CD4-positive, alpha-beta T cell (primary cell): ENCODE measurements at regions of chr3 and their contacts with region 1.

Region 1: GRCh38 chr3:197577366-197578074 is 21.8 kb upstream of the BDH1 start:
- DNase-seq: no peak
- ATAC-seq: no peak
- H3K4me3 ChIP-seq: no peak overlapping the region
- H3K4me3 Mint-ChIP-seq: no peak overlapping the region
- H3K27ac ChIP-seq: no peak overlapping the region
- H3K27ac Mint-ChIP-seq: no peak overlapping the region
- H3K4me1 ChIP-seq: no peaks in the 10 kb centered on the region
- H3K4me1 Mint-ChIP-seq: no peaks in the 10 kb centered on the region
- H3K27me3 ChIP-seq: no peaks in the 10 kb centered on the region
- H3K27me3 Mint-ChIP-seq: no peaks in the 10 kb centered on the region
- CTCF ChIP-seq: no peak

Region 2: DNA sequence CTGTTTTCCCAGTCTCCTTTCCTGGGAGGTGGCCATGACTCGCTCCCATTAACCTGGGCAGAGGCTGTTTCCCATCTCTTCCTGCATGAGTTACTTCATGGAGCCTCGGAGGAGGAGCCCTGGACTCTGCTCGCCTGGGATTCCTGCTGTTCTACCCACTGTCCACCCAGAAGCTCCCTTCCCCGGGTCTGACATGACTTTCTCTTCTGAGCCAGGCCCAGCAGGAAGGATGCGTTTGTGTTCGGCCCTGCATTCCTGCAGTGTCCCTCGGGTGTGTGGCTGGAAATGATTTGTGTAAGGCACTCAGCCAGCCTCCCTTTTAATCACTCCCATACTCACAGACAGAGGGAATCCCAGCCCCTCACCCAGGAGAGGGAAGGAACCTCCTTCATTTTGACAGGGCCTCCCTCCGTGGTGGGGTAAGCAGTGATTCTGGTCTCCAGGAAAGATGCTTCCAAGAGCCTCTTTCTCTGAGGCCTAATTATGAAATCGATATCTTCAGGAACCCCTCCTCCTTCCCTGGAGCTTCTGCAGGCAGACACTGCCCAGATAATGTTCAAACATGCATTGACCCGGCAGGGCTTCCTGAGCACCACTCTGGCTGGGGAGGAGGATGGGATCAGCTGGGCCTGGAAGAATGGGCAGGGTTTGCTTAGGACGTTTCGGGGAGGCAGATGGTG is 237.5 kb before region 1 on chr3:
- CTCF ChIA-PET with region 1: no interaction called
- POLR2A ChIA-PET with region 1: no interaction called
- intact Hi-C with region 1: no loop called
- DNase-seq: no peak
- ATAC-seq: no peak
- H3K4me3 ChIP-seq: no peak overlapping the region
- H3K4me3 Mint-ChIP-seq: no peak overlapping the region
- H3K27ac ChIP-seq: no peak overlapping the region
- H3K27ac Mint-ChIP-seq: no peak overlapping the region
- H3K4me1 ChIP-seq: no peaks in the 10 kb centered on the region
- H3K4me1 Mint-ChIP-seq: no peaks in the 10 kb centered on the region
- H3K27me3 ChIP-seq: no peaks in the 10 kb centered on the region
- H3K27me3 Mint-ChIP-seq: no peaks in the 10 kb centered on the region
- CTCF ChIP-seq: no peak

Region 3: DNA sequence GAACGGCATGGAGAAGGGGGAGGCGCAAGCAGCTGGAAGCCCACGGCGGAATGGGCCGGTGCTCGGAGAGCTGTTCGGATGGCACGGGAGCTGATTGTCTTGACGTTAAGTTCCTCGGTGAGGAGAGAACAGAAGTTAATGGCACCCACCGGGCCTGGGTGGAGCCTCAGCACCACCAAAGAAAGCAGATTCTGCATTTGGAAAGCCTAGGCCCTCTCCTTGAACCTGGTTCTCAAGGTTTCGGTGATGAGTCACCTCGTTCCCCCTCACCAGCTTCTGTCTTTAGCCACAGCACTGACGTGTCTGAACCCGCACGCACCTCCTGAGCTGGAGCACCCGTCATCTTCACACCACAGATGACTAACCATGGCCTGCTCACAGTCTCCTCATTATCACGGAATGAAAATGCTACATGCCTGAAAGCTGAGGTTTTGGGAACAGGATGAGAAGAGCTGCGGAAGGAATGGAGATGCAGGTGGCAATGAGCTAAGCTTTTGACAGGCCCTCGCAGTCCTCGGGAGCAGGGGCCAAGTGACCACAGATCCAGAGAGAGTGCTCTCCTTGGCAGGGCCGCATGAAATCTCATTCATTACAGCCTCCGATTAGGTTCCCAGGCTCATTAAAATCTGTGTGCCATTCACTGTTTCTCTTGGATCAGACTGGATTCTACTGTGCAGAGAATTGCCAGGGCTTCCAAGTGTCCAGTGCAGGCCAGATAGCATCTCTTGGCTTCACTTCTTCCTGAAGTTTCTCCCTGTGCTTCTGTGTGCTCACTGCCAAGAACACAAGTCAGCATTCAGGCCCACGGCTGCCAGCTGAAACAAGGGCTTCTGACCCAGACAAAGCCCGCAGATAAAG is 182.8 kb before region 1 on chr3:
- CTCF ChIA-PET with region 1: no interaction called
- POLR2A ChIA-PET with region 1: no interaction called
- intact Hi-C with region 1: no loop called
- DNase-seq: peak in 6 of 14 experiments; percentile 2 to 49 (median 20)
- ATAC-seq: no peak
- H3K4me3 ChIP-seq: no peak overlapping the region
- H3K4me3 Mint-ChIP-seq: no peak overlapping the region
- H3K27ac ChIP-seq: no peak overlapping the region
- H3K27ac Mint-ChIP-seq: no peak overlapping the region
- H3K4me1 ChIP-seq: no peaks in the 10 kb centered on the region
- H3K4me1 Mint-ChIP-seq: no peaks in the 10 kb centered on the region
- H3K27me3 ChIP-seq: peaks cover 2 to 14% of the 10 kb centered on the region in 2 experiments
- H3K27me3 Mint-ChIP-seq: peaks cover 25% of the 10 kb centered on the region
- CTCF ChIP-seq: no peak

Region 4: DNA sequence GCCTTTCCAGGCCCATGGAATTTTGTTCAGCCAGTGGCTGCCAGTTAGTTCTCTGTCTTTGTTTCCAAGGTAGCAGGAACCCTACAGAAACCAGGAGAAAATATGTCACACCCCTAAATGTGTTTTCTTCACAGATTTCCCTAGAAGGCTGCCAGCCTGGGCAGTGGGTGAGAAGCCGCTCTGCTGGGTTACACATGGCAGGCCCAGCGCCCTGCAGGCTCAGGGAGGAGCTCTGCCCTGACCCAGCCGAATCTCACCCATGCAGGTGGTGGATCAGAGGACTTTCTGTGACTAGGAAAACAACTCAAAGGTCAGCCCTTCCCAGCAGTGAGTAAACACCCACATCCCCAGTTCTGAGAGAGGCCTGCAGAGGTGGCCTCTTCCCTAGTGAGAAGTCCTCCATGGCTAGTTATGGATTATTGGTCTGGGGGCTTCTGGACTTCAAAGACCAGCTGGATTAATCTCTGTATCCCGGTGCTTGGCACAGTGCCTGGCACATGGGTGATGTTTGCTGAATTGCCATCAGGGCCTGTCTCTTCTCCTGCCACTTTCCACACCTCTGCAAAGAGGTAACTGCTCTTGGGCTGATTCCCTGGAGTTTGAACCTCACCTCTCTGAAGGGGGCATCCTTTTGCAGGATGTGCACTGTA is 12.9 kb after region 1 on chr3:
- CTCF ChIA-PET with region 1: no interaction called
- POLR2A ChIA-PET with region 1: no interaction called
- intact Hi-C with region 1: loop called in 1 of 2 experiments (anchors 1 kb)
- DNase-seq: no peak
- ATAC-seq: no peak
- H3K4me3 ChIP-seq: no peak overlapping the region
- H3K4me3 Mint-ChIP-seq: no peak overlapping the region
- H3K27ac ChIP-seq: no peak overlapping the region
- H3K27ac Mint-ChIP-seq: no peak overlapping the region
- H3K4me1 ChIP-seq: no peaks in the 10 kb centered on the region
- H3K4me1 Mint-ChIP-seq: no peaks in the 10 kb centered on the region
- H3K27me3 ChIP-seq: no peaks in the 10 kb centered on the region
- H3K27me3 Mint-ChIP-seq: no peaks in the 10 kb centered on the region
- CTCF ChIP-seq: no peak